Thyroid gland (tissue), 4 donors: ENCODE measurements at regions of chr14 and their contacts with region 1.

Region 1: GRCh38 chr14:54773171-54773975 is 129.3 kb downstream of the GCH1 start:
- DNase-seq: peak; percentile 84 to 85
- H3K4me3 ChIP-seq: no peak overlapping the region
- H3K27ac ChIP-seq: peak overlapping the region; percentile 62 to 79 (median 74)
- H3K4me1 ChIP-seq: peaks cover 0 to 31% of the 10 kb centered on the region in 2 donors
- H3K27me3 ChIP-seq: no peaks in the 10 kb centered on the region
- CTCF ChIP-seq: peak in 5 of 6 experiments; percentile 57 to 89 (median 71)
- POLR2A ChIP-seq: peak in 1 of 2 donors; percentile 17

Region 2: DNA sequence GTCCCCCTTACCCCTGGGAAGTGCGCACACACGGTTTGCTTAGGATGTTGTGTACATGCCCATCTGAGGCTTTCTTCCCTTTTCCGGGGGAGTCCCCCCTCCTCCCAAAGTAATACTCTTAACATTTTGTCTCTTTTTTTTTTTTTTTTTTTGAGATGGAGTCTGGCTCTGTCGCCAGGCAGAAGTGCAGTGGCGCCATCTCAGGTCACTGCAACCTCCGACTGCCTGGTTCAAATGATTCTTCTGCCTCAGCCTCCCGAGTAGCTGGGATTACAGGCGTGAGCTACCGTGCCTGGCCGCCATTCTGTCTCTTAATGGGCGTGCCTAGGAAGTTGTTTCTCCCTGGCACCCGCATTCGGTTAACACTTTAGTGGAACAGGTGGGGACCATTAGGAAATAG is 280.1 kb before region 1 on chr14:
- intact Hi-C with region 1: loop called (anchors 10 kb)
- DNase-seq: no peak
- H3K4me3 ChIP-seq: no peak overlapping the region
- H3K27ac ChIP-seq: no peak overlapping the region
- H3K4me1 ChIP-seq: peaks cover 9 to 10% of the 10 kb centered on the region in 2 donors
- H3K27me3 ChIP-seq: no peaks in the 10 kb centered on the region
- CTCF ChIP-seq: no peak
- POLR2A ChIP-seq: no peak

Region 3: GRCh38 chr14:54566410-54567223 is 206.8 kb before region 1 on chr14 and contains the start of gene SAMD4A:
- intact Hi-C with region 1: loop called (anchors 5 kb)
- DNase-seq: peak; percentile 78
- H3K4me3 ChIP-seq: peak within 1 kb of the TSS; percentile 65 to 78 (median 77)
- H3K27ac ChIP-seq: peak within 1 kb of the TSS; percentile 98 to 100 (median 99)
- H3K4me1 ChIP-seq: peaks cover 7 to 15% of the 10 kb centered on the region in 2 donors
- H3K27me3 ChIP-seq: no peaks in the 10 kb centered on the region
- CTCF ChIP-seq: peak in 4 of 6 experiments; percentile 28 to 43 (median 36)
- POLR2A ChIP-seq: peak in 1 of 2 donors; percentile 67
- total RNA-seq, gene SAMD4A: 12.6 to 32.7 (median 17.6) TPM

Region 4: DNA sequence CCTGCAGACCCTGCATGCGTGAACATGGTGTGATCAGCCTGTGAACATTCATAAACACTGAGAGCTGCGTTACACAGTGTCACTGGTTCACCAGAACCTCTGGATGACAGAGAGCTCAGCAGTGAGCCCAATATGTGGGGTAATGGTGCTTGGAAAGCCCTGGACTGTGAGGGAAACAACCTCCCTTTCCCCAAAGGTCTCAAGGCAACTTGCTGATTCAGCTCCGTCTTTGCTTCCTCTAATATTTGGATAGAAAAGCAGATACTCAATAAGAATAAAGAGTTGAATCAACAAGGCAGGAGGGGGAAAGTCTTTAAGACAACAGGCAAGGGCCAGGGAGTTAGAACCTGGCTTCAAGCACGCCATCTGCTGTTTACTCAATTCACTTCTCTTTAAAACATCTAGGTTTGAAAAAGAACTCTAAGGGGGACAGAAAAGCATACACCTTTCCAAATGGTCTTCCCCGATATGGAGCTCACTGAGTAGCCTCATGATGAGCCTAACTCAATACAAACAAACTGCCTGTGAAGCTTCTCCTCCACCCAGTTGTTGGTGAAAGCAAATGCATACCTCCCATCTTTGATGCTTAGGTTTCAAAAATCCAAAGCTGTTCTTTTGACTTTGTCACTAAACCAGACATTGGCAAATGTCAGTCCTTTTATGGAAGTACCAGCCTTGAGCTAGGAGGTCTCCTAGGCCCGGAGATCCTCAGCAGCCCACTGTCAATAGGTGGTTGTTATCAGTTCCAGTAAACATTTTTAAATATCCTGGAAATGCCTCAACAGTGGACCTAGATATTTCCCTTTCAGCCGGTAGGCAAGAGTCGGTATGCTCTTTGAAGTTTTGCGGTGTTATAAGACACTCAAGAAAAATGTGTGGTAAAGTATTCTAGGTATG is 130.3 kb before region 1 on chr14:
- intact Hi-C with region 1: loop called (anchors 5 kb)
- DNase-seq: peak in 1 of 2 donors; percentile 30
- H3K4me3 ChIP-seq: no peak overlapping the region
- H3K27ac ChIP-seq: peak overlapping the region in 1 of 3 donors; percentile 40
- H3K4me1 ChIP-seq: peaks cover 6 to 17% of the 10 kb centered on the region in 2 donors
- H3K27me3 ChIP-seq: no peaks in the 10 kb centered on the region
- CTCF ChIP-seq: peak in 4 of 6 experiments; percentile 26 to 37 (median 36)
- POLR2A ChIP-seq: no peak

Region 5: GRCh38 chr14:54691525-54692283 is 81.7 kb before region 1 on chr14:
- intact Hi-C with region 1: loop called (anchors 10 kb)
- DNase-seq: peak; percentile 82 to 87
- H3K4me3 ChIP-seq: no peak overlapping the region
- H3K27ac ChIP-seq: no peak overlapping the region
- H3K4me1 ChIP-seq: peaks cover 3 to 17% of the 10 kb centered on the region in 2 donors
- H3K27me3 ChIP-seq: no peaks in the 10 kb centered on the region
- CTCF ChIP-seq: peak; percentile 62 to 90 (median 84)
- POLR2A ChIP-seq: no peak